ENCODE measurements at regions of chr10 and their contacts with region 1.

Region 1: GRCh38 chr10:22003079-22003913 is at the start of gene DNAJC1:
- DNase-seq: peak; percentile 99
- ATAC-seq: peak; percentile 99
- total RNA-seq, gene DNAJC1: 10.9 TPM

Region 2: GRCh38 chr10:21732067-21732772 is 271.1 kb before region 1 on chr10:
- intact Hi-C with region 1: no loop called
- DNase-seq: peak; percentile 71
- ATAC-seq: peak; percentile 94

Region 3: GRCh38 chr10:22228943-22229801 is 225.9 kb after region 1 on chr10:
- intact Hi-C with region 1: loop called (anchors 5 kb)
- DNase-seq: peak; percentile 89
- ATAC-seq: peak; percentile 99

Region 4: GRCh38 chr10:22436884-22437619 is 433.8 kb after region 1 on chr10:
- intact Hi-C with region 1: loop called (anchors 10 kb)
- DNase-seq: peak; percentile 97
- ATAC-seq: peak; percentile 97

Measured in Right ventricle myocardium superior (tissue), 1 donor.